ENCODE measurements at regions of chr6 and their contacts with region 1.

Region 1: DNA sequence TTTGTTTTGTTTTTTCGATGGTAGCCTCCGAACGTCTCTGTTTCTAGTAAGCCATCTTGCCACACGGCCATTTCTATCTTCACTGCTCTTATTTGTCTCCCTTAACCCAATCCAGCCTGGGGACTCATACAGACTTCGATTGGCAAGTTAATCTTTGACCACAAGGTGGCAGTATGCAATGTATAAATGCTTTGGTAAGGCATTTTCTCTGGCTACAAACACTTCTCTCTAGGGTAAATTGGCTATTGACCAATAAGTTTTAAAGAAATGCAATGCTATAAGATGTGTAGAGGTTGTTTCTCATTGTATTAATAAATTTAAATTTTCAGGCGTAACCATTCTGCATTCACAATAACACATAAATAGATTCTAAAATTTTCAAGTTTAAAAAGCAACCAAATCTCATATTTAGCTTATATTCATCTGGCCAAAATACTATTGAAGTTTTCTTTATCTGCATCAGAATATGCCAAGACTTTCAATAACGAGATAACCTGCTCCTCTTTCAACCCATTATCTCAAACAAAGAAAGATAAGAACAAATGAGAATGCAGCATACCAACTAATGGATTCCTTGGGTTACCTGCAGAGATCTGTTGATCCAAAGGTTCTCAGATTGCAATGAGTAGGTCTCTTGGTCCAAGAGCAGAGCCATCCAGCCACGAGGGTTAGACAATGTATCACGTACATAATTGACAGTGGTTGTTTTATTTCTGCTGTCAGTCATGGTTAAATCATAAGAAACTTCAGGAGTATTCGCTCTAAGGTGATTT is 231.9 kb downstream of the PKHD1 start:
- DNase-seq: peak; percentile 32
- H3K4me3 ChIP-seq: no peak overlapping the region
- H3K27ac ChIP-seq: no peak overlapping the region
- H3K4me1 ChIP-seq: no peaks in the 10 kb centered on the region
- H3K27me3 ChIP-seq: no peaks in the 10 kb centered on the region
- CTCF ChIP-seq: peak; percentile 35 to 44
- POLR2A ChIP-seq: no peak

Region 2: DNA sequence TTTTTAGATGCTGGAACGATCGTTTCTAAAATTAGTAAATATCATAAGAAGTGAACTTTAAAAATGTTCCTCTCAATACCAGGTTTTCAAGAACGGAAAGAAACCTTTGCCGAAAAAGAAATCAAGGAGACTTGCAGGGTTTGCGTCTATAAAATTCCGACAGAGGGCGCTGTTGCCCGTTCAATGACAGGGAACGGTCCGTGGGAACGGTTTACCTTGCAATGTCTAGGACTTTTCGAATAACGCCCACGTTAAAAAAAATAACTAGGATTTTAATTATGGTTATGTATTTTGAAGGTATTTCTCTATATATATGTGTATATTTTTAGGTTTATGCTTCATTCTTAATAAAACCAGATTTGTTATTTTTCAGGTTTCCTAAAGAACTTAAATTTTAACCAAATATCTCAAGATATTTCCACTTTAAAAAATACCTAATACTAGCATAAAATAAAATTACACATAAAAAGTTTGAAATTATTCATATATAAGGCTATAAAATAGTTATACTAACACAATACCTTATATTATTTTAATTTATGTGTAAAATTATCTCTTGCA is 1039.3 kb before region 1 on chr6:
- CTCF ChIA-PET with region 1: no interaction called
- POLR2A ChIA-PET with region 1: no interaction called
- dilution Hi-C with region 1: no loop called
- intact Hi-C with region 1: loop called (anchors 10 kb)
- DNase-seq: peak; percentile 71
- H3K4me3 ChIP-seq: peak overlapping the region; percentile 42 to 85 (median 74)
- H3K27ac ChIP-seq: no peak overlapping the region
- H3K4me1 ChIP-seq: no peaks in the 10 kb centered on the region
- H3K27me3 ChIP-seq: peaks cover 37 to 49% of the 10 kb centered on the region in 2 experiments
- CTCF ChIP-seq: peak; percentile 58 to 77
- POLR2A ChIP-seq: no peak

Region 3: DNA sequence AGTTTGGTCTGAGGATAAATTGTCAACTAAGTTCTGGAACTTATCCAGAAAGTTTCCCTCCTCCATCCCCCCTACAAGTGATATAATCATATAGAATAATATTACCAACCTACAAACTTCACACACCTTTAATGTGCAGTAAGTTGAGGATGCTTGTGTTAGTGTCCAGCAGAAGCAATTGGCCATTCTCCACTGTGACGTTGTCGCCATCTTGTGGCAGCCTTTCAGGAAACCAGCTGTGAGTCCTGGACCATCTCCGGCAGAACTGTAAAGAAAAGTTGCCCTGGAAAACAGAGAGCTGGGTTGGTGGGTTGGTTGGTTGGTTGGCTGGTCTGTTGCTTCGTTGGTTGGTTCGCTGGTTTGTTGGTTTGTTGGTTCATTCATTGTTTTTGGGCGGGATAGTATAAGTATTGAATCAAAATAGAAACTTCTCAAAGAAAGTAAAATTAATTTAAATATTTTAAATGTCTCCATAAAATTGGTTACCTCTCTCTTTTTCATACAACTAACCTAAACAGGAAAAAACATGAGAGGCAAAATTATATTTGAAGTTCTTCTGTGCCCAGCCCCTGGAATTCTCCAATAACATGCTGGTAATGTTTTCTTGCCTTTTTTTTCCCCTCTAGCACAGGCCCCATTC is 104.4 kb after region 1 on chr6:
- CTCF ChIA-PET with region 1: interaction called, 3 read pairs
- POLR2A ChIA-PET with region 1: no interaction called
- dilution Hi-C with region 1: no loop called
- intact Hi-C with region 1: loop called (anchors 1 kb)
- DNase-seq: peak; percentile 60
- H3K4me3 ChIP-seq: no peak overlapping the region
- H3K27ac ChIP-seq: no peak overlapping the region
- H3K4me1 ChIP-seq: no peaks in the 10 kb centered on the region
- H3K27me3 ChIP-seq: no peaks in the 10 kb centered on the region
- CTCF ChIP-seq: peak; percentile 58 to 71
- POLR2A ChIP-seq: no peak

Region 4: DNA sequence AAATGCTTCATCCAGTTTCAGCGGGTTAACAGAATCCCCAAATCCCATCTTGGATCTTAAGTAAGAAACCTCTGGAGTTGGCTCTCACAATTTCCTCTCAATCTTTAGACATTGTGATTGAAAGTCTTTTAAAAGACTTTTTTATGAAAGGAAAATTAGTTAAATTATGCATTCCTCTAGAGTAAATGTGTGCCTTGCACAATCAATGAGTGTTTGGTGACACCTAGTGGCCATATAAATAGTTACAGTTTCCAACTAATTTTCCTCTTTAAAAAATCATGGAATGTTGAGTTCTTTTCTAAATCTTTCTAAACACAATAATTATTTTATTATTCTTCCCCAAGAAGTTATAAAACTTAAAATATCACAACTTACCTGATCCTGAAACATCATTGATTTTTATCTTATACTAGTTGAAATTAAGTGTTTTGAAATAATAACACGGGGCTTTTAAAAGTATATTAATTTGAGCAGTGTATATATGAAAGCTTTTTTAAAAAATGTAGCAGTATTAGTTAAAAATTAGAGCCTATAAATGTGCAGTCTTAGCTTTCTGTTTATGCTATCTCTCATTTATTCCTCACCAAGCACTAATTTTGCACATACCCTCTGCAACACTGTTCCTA is 165.6 kb after region 1 on chr6:
- CTCF ChIA-PET with region 1: no interaction called
- POLR2A ChIA-PET with region 1: no interaction called
- dilution Hi-C with region 1: no loop called
- intact Hi-C with region 1: loop called (anchors 1 kb)
- DNase-seq: peak; percentile 33
- H3K4me3 ChIP-seq: no peak overlapping the region
- H3K27ac ChIP-seq: no peak overlapping the region
- H3K4me1 ChIP-seq: no peaks in the 10 kb centered on the region
- H3K27me3 ChIP-seq: no peaks in the 10 kb centered on the region
- CTCF ChIP-seq: peak in 1 of 2 donors; percentile 41
- POLR2A ChIP-seq: no peak

Measured in endothelial cell of umbilical vein (primary cell).